ENCODE measurements at regions of chr10 and their contacts with region 1.

Region 1: DNA sequence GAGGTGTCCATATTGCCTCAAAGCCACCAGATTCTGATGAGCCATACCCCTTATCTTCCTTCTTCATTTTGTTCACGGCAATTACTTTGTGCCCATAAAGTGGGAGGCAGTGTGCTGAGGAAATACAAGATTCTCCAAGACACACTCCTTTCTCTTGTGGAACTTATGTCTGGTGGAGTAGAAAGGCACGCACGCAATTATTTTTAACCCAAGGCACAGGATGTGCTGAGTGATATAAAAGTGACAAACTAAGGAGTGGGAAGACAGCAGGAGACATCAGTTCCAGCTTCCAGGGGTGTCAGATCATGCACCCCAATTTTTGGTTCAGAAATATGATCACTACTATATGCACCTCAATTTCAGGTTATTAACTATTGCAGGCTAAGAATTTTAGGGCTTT is 94.7 kb upstream of the PDCD4 start:
- DNase-seq: no peak
- ATAC-seq: no peak
- H3K4me3 ChIP-seq: no peak overlapping the region
- H3K27ac ChIP-seq: no peak overlapping the region
- H3K4me1 ChIP-seq: no peaks in the 10 kb centered on the region
- H3K27me3 ChIP-seq: peaks cover 21% of the 10 kb centered on the region
- CTCF ChIP-seq: no peak
- POLR2A ChIP-seq: no peak
- RAD21 ChIP-seq: no peak

Region 2: DNA sequence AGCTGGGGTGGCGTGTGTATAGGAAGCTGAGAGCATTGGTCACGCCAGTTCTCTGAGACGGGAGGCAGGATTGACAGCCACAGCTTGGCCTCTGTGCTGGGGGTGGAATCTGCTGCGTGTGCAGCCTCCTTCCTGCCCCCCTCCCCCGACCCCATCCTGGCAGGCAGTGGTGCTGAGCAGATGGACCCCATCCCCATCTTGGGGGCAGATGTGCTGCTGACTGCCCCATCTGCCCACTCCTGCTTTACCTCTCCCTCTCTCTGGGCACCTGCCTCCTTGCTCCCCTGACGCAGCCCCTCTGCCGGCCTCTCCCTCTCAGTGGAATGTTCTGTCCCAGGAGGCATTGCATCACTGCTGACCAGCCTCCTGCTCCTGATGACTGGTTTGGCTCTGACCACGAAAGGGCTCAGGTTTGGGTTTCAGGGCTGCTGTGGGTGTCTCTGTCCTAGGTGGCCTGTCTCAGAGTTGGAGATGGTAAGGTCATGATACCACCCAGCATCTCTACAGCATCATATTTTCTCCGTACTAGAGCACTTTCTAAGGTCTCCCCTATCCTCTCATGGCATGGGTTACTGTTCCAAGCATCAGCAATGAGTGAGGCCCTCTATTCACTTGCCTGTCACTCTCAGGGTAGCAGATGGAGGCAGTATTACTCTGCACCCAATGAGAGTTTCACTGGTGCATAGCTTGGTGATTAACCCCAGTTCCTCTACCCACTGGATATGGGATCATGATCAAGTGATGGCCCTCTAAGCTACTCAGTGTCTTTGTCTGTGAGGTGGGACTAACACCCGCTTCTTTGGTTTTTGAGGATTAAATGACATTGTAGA is 51.0 kb before region 1 on chr10:
- CTCF ChIA-PET with region 1: no interaction called
- POLR2A ChIA-PET with region 1: no interaction called
- dilution Hi-C with region 1: no loop called
- in situ Hi-C with region 1: no loop called
- intact Hi-C with region 1: no loop called
- DNase-seq: peak; percentile 37
- ATAC-seq: peak; percentile 62
- H3K4me3 ChIP-seq: no peak overlapping the region
- H3K27ac ChIP-seq: no peak overlapping the region
- H3K4me1 ChIP-seq: peaks cover 1% of the 10 kb centered on the region; the same call in 1 of the 2 replicates
- H3K27me3 ChIP-seq: peaks cover 13% of the 10 kb centered on the region
- CTCF ChIP-seq: no peak
- POLR2A ChIP-seq: no peak
- RAD21 ChIP-seq: no peak

Region 3: GRCh38 chr10:110790913-110791506 is 14.0 kb after region 1 on chr10:
- CTCF ChIA-PET with region 1: no interaction called
- POLR2A ChIA-PET with region 1: no interaction called
- dilution Hi-C with region 1: no loop called
- in situ Hi-C with region 1: no loop called
- intact Hi-C with region 1: loop called (anchors 1 kb)
- DNase-seq: peak; percentile 52
- ATAC-seq: peak; percentile 91
- H3K4me3 ChIP-seq: no peak overlapping the region
- H3K27ac ChIP-seq: peak overlapping the region; percentile 84; the same call in 1 of the 2 replicates
- H3K4me1 ChIP-seq: peaks cover 18% of the 10 kb centered on the region; the same call in 1 of the 2 replicates
- H3K27me3 ChIP-seq: 0 out of 2 replicates have a peak, but pooled peaks cover 3% of the 10 kb centered on the region
- CTCF ChIP-seq: no peak
- POLR2A ChIP-seq: no peak
- RAD21 ChIP-seq: no peak